PC-9 (cell line): ENCODE measurements at regions of chr1 and their contacts with region 1.

Region 1: DNA sequence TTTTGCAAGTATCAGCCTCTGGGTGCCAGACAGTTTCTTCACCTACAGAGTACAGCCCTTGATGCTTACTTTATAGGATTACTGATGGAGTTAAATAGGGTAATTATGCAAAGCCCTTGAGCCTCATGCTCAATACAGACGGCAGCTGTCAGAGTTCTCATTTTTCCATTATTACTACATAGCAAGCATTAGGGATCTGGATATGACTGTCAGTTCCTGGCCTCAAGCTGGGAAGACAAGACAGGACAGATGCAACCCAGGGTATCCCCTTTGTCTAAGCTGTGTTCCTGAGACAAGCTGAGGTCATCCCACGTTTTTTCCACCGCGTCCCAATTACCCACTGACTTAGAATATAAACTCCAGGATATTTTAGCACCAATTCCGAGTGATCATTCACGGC is 94.4 kb downstream of the SLC35F3 start:
- DNase-seq: no peak
- H3K4me3 ChIP-seq: no peak overlapping the region
- H3K27ac ChIP-seq: no peak overlapping the region
- H3K4me1 ChIP-seq: peaks cover 18% of the 10 kb centered on the region
- H3K27me3 ChIP-seq: no peaks in the 10 kb centered on the region
- CTCF ChIP-seq: no peak

Region 2: DNA sequence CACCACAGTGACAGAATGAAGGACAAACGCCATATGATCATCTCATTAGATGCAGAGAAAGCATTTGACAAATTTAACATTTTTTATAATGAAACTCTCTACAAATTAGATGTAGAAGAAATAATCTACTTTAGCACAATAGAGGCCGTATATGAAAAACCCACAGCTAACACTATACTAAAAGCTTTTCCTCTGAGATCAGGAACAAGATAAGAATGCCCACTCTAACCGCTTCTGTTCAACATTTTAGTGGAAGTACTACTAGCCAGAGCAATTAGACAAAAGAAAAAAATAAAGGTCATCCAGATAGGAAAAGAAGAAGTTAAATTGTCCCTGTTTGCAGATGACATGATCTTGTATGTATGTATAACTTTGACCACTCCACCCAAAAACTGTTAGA is 15.3 kb after region 1 on chr1:
- CTCF ChIA-PET with region 1: interaction called, 10 read pairs
- POLR2A ChIA-PET with region 1: no interaction called
- intact Hi-C with region 1: no loop called
- DNase-seq: no peak
- H3K4me3 ChIP-seq: no peak overlapping the region
- H3K27ac ChIP-seq: no peak overlapping the region
- H3K4me1 ChIP-seq: no peaks in the 10 kb centered on the region
- H3K27me3 ChIP-seq: no peaks in the 10 kb centered on the region
- CTCF ChIP-seq: no peak